Heart left ventricle (tissue), 16 donors: ENCODE measurements at regions of chr11 and their contacts with region 1.

Region 1: DNA sequence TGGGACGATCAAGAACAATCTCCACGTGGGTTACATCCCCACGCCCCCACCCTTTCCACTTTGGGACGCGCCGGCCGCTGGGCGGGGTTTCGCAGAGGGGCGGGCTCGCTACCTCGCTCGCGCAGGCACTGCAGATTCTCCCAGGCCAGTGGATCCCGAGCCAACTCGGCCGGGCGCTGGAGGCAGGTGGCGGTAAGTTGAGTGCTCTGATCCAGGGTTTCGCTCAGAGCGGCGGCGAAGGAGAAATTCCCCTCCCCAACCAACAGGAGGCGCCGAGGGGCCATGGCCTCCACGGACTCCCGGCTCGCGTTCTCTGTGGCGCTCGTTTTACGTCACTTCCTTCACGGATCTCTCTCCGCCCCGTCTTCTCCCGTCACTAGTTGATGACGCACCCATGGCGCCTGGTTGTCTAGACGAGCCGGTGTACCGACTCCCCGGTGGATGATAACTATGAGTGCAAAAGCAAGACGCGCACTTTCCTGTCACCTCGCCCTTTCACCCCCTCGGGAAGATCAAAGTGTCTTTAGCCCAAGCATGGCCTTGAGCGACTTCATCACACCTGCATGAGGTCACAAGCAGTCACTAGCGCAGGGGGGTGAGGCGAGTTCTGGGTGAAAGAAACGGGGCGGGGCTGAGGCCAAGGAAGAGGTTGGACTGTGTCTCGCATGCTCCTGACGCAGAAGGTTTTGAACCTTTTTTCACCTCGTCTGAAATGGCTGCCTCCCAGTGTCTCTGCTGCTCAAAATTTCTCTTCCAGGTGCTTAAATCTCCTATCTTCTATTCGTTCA is at the starts of genes CFAP68 and FDXACB1:
- DNase-seq: peak; percentile 97 to 98 (median 98)
- ATAC-seq: peak; percentile 93 to 96 (median 95)
- H3K4me3 ChIP-seq: peak within 1 kb of the TSS; percentile 41 to 84 (median 72)
- H3K27ac ChIP-seq: peak within 1 kb of the TSS; percentile 90 to 98 (median 93)
- H3K4me1 ChIP-seq: peaks cover 0 to 24% (median 12%) of the 10 kb centered on the region in 12 donors
- H3K27me3 ChIP-seq: no peaks in the 10 kb centered on the region
- CTCF ChIP-seq: peak; percentile 91 to 99 (median 96)
- POLR2A ChIP-seq: peak in 1 of 2 donors; percentile 65
- total RNA-seq, gene CFAP68: 11.9 to 38.7 (median 31.8) TPM
- total RNA-seq, gene FDXACB1: 0.93 to 2.0 (median 1.3) TPM

Region 2: DNA sequence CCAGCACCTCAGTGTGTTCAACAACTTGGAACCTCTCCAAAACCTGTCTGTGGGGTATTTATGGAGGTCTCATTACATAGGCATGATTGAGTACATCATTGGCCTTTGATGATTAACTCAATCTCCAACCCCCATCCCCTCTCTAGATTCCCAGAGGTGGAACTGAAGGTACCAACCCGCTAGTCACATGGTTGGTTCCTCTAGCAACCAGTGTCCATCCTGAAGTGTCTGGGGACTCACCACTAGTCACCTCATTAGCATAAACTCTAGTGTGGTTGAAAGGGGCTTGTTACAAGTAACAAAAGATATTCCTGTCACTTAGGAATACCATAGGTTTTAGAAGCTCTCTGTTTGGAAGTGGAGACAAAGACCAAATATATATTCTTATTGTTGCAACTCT is 236.5 kb before region 1 on chr11:
- intact Hi-C with region 1: no loop called
- DNase-seq: no peak
- ATAC-seq: no peak
- H3K4me3 ChIP-seq: no peak overlapping the region
- H3K27ac ChIP-seq: no peak overlapping the region
- H3K4me1 ChIP-seq: peaks cover 0 to 26% (median 5%) of the 10 kb centered on the region in 12 donors
- H3K27me3 ChIP-seq: no peaks in the 10 kb centered on the region
- CTCF ChIP-seq: no peak
- POLR2A ChIP-seq: no peak

Region 3: GRCh38 chr11:111911563-111912401 is 32.7 kb after region 1 on chr11 and contains the start of gene CRYAB:
- intact Hi-C with region 1: loop called in 3 of 10 experiments (anchors 1 to 5 kb)
- DNase-seq: peak; percentile 85 to 95 (median 89)
- ATAC-seq: peak; percentile 75 to 82 (median 77)
- H3K4me3 ChIP-seq: peak within 1 kb of the TSS; percentile 38 to 80 (median 59)
- H3K27ac ChIP-seq: peak within 1 kb of the TSS; percentile 89 to 100 (median 96)
- H3K4me1 ChIP-seq: peaks cover 0 to 29% (median 7%) of the 10 kb centered on the region in 12 donors
- H3K27me3 ChIP-seq: peaks cover 0 to 10% (median 0%) of the 10 kb centered on the region in 9 donors
- CTCF ChIP-seq: no peak
- POLR2A ChIP-seq: peak; percentile 41 to 95
- total RNA-seq, gene CRYAB: 4,504 to 20,720 (median 7,991) TPM

Region 4: GRCh38 chr11:111938687-111939160 is 59.7 kb after region 1 on chr11:
- intact Hi-C with region 1: loop called in 1 of 10 experiments (anchors 5 kb)
- DNase-seq: no peak
- ATAC-seq: peak in 2 of 4 donors; percentile 3 to 8
- H3K4me3 ChIP-seq: peak overlapping the region in 6 of 12 donors; percentile 3 to 85 (median 67)
- H3K27ac ChIP-seq: peak overlapping the region in 10 of 12 donors; percentile 45 to 86 (median 71)
- H3K4me1 ChIP-seq: peaks cover 0 to 65% (median 36%) of the 10 kb centered on the region in 12 donors
- H3K27me3 ChIP-seq: no peaks in the 10 kb centered on the region
- CTCF ChIP-seq: no peak
- POLR2A ChIP-seq: no peak

Region 5: DNA sequence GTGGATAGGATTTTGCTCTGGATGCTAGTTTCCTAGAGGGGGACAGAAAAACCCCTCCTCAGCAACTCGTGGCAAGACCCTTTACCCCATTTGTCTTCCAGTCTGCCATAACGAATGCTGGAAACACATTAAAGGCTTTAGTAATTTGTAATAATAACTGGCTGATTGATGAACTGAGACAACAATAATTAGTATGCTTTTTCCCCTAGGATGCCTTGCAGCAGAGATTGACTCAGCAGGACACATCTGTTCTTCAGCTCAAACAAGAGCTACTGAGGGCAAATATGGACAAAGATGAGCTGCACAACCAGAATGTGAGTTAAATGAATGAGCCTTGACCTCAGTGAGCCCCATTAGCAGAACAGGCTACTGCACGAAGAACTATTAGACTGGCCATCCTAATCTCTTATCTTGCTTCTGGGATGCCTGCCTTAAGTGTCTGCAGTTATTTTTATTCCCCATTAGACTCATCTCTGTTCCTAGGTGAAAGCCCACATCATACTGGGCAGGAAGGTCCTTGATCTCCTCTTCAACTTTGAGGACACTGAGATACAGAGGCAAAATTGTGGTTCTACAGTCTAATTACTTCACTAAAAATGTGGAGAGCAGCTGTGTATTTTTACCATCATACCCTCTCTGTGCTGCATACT is 113.3 kb after region 1 on chr11:
- intact Hi-C with region 1: loop called in 3 of 10 experiments (anchors 5 to 10 kb)
- DNase-seq: no peak
- ATAC-seq: peak; percentile 43 to 75 (median 62)
- H3K4me3 ChIP-seq: no peak overlapping the region
- H3K27ac ChIP-seq: peak overlapping the region in 11 of 12 donors; percentile 16 to 77 (median 62)
- H3K4me1 ChIP-seq: peaks cover 0 to 51% (median 8%) of the 10 kb centered on the region in 12 donors
- H3K27me3 ChIP-seq: no peaks in the 10 kb centered on the region
- CTCF ChIP-seq: no peak
- POLR2A ChIP-seq: no peak

Region 6: DNA sequence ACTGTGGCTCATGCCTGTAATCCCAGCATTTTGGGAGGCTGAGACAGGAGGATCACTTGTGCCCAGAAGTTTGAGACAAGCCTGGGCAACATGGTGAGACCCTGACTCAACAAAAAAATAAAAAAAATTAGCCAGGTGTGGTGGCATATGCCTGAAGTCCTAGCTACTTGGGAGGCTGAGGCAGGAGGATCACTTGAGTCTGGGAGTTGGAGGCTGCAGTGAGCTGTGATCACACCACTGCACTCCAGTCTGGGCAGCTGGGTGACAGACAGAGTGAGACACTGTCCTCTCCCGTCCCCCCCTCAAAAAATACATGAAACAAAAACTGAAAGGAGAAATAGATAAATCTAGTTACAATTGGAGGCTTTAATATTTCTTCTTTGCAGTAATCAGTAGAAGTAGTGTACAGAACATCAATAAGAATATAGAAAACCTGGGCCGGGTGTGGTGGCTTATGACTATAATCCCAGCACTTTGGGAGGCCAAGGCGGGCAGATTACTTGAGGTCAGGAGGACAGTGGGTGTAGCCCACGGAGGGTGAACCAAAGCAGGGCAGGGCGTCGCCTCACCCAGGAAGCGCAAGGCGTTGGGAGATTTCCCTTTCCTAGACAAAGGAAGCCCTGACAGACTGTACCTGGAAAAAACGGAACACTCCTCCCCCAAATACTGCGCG is 126.5 kb after region 1 on chr11:
- intact Hi-C with region 1: no loop called
- DNase-seq: no peak
- ATAC-seq: no peak
- H3K4me3 ChIP-seq: no peak overlapping the region
- H3K27ac ChIP-seq: no peak overlapping the region
- H3K4me1 ChIP-seq: peaks cover 0 to 12% (median 0%) of the 10 kb centered on the region in 12 donors
- H3K27me3 ChIP-seq: no peaks in the 10 kb centered on the region
- CTCF ChIP-seq: no peak
- POLR2A ChIP-seq: no peak

Region 7: DNA sequence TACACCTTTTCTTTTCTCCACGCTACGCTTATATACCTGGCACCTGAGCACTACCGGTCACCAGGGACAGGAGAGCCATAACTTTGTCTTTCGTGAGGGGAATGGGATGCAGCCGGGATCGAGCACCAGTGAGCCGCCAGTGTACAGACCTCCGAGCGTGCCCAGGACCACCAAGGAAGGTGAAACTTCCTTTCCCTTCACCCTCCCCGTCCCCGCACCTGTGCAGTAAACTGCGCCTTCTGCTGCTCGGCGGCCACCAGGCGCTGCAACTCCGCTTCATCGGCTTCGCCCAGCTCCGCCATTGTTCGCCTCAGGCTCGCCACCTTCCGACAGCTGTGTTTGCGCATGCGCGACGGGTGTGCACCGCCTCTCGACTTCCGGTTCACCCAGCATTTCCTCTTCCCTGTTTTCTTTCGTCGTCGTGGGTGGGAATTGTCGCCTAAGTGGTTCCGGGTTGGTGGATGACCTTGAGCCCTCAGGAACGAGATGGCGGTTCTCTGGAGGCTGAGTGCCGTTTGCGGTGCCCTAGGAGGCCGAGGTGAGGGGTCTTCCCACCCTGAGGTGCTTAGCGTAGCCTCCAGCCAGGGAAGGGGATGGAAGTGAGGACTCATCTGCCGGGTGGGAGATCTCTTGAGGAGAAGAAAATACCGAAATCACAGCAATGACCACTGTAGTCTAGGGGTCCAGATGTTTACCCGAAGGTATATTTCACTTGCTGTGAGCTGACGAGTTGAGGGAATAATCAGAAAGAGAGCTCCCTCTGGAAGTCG is 207.6 kb after region 1 on chr11 and contains the starts of genes SDHD and TIMM8B:
- intact Hi-C with region 1: loop called in 6 of 10 experiments (anchors 5 to 10 kb)
- DNase-seq: peak; percentile 96 to 97 (median 96)
- ATAC-seq: peak; percentile 93 to 97 (median 94)
- H3K4me3 ChIP-seq: peak within 1 kb of the TSS; percentile 74 to 96 (median 90)
- H3K27ac ChIP-seq: peak within 1 kb of the TSS; percentile 55 to 95 (median 88)
- H3K4me1 ChIP-seq: peaks cover 3 to 50% (median 38%) of the 10 kb centered on the region in 12 donors
- H3K27me3 ChIP-seq: no peaks in the 10 kb centered on the region
- CTCF ChIP-seq: peak in 8 of 12 donors; percentile 6 to 39 (median 22)
- POLR2A ChIP-seq: peak in 1 of 2 donors; percentile 65
- total RNA-seq, gene SDHD: 173 to 314 (median 245) TPM
- total RNA-seq, gene TIMM8B: 113 to 203 (median 148) TPM